ENCODE measurements at regions of chr22 and their contacts with region 1.

Region 1: GRCh38 chr22:33302049-33302545 is 243.9 kb upstream of the SYN3 start:
- DNase-seq: peak; percentile 79 to 98 (median 91)

Region 2: GRCh38 chr22:33347002-33347401 is 44.9 kb after region 1 on chr22:
- intact Hi-C with region 1: no loop called
- DNase-seq: no peak

Region 3: DNA sequence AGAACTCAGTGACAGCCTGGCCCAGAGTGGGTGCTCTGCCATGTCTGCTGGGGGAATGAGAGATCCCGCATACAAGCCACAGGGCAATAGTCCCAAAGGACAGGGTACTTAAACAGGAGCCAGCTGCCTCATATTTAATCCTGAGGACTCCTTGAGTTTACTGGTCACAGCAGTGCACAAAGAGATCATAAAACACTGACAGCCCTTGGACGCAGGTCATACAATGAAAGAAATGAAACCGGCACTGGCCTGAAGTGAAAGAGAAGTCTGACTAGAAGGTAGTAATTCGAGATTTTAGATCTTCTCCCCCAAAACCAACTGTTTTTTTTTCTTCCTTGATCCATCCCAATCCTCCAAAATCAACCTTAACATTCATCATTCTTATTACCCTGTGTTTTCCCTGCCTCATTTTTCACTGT is 55.9 kb after region 1 on chr22:
- intact Hi-C with region 1: no loop called
- DNase-seq: no peak

Region 4: DNA sequence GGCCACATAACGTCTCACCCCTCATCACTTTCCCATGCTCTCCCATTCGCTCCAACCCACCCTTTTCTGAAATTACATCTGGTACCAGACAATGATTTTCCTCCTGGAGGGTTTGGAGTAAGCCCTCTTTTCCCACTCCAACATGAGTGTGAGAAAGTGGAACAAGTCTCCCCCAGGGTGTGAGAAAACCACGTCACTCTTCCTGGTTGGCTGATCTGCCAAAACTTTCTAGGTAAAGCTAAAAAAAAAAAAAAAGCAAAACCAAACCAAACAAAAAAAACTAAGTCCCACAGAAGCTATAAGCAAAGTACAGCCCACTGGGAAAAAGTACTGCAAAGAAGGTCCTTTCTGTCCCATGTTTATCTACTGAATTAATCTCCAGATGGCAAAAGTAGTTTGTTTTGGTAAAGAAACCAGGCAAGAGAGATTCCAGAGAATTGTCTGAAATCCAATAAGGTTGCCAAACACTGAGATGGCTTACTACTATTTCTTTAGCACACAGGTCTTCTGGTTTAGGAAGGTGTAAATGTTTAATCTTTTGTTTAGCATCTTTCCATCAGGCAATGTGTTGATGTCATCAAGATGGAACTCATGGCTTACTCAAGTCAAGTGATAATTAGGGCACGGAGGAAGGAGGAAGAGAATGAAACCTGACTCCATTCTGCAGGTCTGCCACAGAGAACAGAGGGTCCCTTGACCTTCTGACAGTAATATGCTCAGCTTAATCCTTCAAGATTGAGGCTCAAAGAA is 222.6 kb after region 1 on chr22:
- intact Hi-C with region 1: loop called (anchors 5 kb)
- DNase-seq: no peak

Region 5: GRCh38 chr22:33579448-33580093 is 277.5 kb after region 1 on chr22:
- intact Hi-C with region 1: loop called (anchors 1 kb)
- DNase-seq: peak in 6 of 10 donors; percentile 43 to 83 (median 65)

Region 6: GRCh38 chr22:33920927-33921524 is 618.9 kb after region 1 on chr22:
- intact Hi-C with region 1: loop called (anchors 2 kb)
- DNase-seq: peak; percentile 98 to 100 (median 99)

Region 7: DNA sequence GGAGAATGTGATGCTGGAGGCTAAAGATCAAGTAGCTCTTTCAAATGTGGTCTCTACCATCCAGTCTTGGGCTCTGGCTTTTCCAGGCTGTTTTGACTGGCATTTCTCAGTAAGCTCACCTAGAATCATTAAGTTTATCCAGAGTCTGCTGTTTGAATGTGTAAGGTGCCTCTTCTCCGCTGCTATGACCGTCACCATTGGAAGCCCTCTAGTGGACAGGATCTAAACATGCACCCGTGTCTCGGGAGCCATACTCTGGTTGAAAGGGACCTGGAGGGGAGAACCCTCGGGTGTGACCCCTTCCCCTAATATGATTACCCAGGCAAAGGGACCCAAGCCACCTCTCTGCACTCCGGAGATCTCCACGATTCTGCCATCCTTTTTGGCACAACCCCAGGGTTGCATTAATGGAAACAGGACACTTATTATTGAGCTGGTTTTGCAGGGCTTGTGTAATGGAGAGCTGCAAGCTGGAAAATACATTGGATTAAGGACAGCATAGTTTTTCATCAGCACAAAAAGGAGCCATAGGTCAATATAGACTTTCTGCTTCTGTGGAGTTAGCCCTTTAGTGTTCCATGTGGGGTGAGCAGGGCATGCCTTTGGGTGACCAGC is 809.2 kb after region 1 on chr22:
- intact Hi-C with region 1: loop called (anchors 5 kb)
- DNase-seq: peak in 3 of 10 donors; percentile 12 to 24 (median 20)

Region 8: DNA sequence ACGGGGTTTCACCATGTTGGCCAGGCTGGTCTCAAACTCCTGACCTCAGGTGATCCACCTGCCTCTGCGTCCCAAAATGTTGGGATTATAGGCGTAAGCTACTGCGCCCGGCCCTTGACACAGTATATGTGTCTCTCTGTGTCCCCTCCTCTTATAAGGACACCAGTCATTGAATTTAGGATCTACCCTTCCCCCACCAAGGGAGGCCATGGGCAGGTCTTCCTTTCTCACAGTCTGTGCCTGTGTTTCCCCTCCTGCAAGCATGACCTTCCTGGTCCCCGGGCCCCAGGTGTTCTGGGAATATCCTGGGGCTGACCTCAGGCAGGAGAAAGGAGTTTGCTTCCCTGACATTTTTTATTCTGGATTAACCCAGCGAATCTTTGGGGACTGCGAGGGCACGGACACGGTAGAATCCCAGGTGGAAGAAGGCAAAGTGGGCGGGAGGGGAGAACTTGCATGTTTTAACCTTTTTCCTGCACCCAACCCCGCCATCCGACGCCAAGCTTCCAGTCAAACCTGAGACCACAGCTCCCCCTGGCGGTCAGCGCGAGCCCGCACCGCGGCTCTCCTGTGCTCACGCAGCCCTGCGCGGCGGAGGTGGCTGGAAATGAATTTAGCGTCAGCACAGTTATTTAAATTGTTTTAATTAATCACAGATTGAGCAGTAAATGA is 1721.7 kb after region 1 on chr22:
- intact Hi-C with region 1: loop called (anchors 5 kb)
- DNase-seq: peak; percentile 40 to 96 (median 82)

Region 9: DNA sequence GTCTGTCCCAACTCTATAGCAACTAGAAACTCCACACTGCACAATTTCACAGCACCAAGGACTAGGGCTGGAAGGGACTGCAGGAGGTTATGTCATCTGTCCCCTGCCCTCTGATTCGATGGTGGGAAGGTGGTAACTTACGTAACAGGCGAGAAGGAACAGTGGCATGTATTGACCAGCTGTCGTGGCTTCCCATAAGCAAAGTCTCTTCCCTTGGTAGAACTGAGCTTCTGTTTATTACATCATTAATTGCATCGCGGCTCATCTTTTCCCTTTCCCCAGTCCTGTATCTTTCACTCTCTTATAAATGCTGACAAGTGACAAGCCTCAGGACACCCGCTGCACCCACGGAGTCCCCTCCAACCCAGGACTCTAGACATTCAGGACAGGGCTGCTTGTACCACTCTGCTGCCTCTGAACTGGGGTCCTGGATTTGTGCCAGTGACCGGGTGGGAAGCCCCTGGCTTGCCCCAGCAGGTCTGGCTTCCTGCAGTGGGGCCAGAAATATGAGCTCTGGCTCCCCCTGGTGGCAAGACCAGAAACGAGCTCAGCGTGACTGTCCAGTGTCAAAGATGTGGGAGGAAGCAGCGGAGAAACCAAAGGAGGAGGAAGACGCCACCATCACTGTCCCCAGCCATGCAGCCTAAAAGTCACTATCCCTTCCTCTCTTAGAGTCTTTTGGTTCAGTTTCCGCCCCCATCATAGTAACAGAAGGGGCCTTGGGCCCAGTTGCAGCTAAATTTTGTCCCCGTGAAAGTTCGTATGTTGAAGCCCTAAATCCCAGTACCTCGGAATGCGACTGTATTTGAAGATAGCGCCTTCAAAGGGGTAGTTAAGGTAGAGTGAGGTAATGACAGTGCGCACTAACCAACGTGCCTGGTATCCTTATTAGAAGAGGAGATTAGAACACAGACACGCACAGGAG is 1848.3 kb after region 1 on chr22:
- intact Hi-C with region 1: loop called (anchors 5 kb)
- DNase-seq: peak; percentile 34 to 96 (median 73)